PC-3 (cell line): ENCODE measurements at regions of chr5 and their contacts with region 1.

Region 1: DNA sequence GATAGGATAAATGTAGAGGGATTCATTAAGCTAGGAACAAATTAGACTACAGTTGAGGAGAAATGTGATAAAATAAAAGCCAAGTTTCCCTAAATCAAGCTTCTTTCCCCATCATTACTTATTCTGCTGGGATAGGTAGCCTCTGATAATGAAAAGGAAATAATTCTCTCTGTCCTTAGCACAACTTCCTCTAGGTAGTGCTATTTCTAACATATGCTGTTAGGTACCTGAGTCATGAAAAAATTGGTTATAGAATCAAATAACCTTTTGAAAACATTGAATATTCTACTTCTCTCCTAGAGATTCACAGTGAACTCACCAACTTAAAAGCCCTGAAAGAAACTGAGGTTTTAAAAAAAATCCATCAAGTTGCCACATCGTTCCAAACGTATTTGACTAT is 1793.1 kb downstream of the EFNA5 start:
- DNase-seq: peak; percentile 39
- ATAC-seq: no peak
- H3K4me3 ChIP-seq: no peak overlapping the region
- H3K27ac ChIP-seq: no peak overlapping the region
- H3K4me1 ChIP-seq: peaks cover 5% of the 10 kb centered on the region
- H3K27me3 ChIP-seq: no peaks in the 10 kb centered on the region
- CTCF ChIP-seq: peak; percentile 57

Region 2: GRCh38 chr5:105952875-105953274 is 75.3 kb after region 1 on chr5:
- CTCF ChIA-PET with region 1: no interaction called
- POLR2A ChIA-PET with region 1: no interaction called
- intact Hi-C with region 1: no loop called
- DNase-seq: no peak
- ATAC-seq: no peak
- H3K4me3 ChIP-seq: no peak overlapping the region
- H3K27ac ChIP-seq: no peak overlapping the region
- H3K4me1 ChIP-seq: peaks cover 9% of the 10 kb centered on the region
- H3K27me3 ChIP-seq: no peaks in the 10 kb centered on the region
- CTCF ChIP-seq: no peak

Region 3: DNA sequence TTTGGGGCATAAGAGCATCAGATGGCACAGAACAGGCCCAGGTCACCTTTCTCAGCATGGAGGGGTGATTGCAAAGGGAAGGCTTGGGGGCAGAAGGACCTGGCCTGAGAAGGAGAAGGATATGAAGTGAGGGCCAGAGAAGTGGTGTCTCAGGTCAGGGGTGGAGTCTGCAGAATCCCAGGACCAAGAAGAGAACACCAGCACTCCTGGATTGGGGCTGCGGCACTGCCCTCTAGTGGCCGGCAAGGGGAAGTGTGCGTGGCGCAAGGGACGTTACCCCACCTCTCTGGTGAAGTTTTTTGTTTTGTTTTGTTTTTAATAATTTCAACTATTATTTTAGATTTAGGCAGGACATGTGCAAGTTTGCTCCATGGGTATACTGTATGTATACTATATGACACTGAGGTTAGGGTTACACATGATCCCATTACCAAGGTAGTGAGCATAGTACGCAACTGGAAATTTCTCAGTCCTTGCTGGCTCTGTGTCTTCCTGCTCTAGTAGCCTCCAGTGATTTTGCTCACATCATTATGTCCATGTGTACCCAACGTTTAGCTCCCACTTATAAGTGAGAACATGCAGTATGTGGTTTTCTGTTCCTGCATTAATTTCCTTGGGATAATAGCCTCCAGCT is 244.5 kb after region 1 on chr5:
- CTCF ChIA-PET with region 1: no interaction called
- POLR2A ChIA-PET with region 1: no interaction called
- intact Hi-C with region 1: loop called (anchors 5 kb)
- DNase-seq: peak; percentile 60
- ATAC-seq: peak; percentile 97
- H3K4me3 ChIP-seq: no peak overlapping the region
- H3K27ac ChIP-seq: no peak overlapping the region
- H3K4me1 ChIP-seq: no peaks in the 10 kb centered on the region
- H3K27me3 ChIP-seq: no peaks in the 10 kb centered on the region
- CTCF ChIP-seq: peak; percentile 94